ENCODE measurements at regions of chr2 and their contacts with region 1.

Region 1: DNA sequence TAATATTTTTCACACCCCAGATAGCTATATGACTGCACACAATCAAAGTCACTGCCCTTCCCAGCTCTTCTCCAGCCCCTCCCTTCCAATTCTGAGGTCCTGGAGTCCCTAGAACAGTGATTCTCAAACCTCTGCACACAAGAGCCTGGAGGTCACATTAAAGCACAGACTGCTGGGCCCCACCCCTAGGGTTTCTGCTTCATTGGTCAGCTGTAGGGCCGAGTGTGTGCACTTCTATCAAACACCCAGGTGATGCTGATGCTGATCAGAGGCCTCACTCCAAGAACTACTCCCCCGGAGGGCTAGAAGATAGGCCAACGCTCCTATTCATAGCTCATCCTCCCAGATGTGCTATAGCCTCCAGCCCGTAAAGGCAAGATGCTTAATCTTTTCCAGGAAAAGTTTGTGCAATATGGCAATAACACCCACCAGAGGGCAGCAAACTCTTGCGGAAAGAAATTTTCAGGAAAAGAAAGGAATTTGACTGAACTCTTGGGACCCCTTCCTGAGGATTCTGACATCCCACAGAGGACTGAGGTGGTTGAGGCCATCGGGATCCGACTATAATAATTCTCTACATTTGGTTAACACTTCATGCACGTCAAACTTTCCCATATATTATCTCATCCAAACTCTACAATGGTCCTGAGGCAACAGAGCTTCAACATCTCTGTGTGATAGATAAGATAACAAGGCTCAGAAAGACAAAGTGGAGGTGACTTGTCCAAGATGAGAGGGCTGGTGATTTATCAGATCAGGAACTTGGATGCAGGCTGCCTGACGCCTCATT is 194.2 kb upstream of the PKDCC start:
- DNase-seq: peak; percentile 71
- H3K4me3 ChIP-seq: no peak overlapping the region
- H3K27ac ChIP-seq: no peak overlapping the region
- H3K4me1 ChIP-seq: peaks cover 0 to 7% of the 10 kb centered on the region in 2 experiments; a peak in 1 of 4 replicates
- H3K27me3 ChIP-seq: no peaks in the 10 kb centered on the region; the same call in 1 of the 2 replicates
- CTCF ChIP-seq: peak; percentile 91
- EP300 ChIP-seq: 0 out of 4 replicates have a peak, but pooled peaks of 1 of the 2 experiments have one; percentile 13
- RAD21 ChIP-seq: peak; percentile 99

Region 2: DNA sequence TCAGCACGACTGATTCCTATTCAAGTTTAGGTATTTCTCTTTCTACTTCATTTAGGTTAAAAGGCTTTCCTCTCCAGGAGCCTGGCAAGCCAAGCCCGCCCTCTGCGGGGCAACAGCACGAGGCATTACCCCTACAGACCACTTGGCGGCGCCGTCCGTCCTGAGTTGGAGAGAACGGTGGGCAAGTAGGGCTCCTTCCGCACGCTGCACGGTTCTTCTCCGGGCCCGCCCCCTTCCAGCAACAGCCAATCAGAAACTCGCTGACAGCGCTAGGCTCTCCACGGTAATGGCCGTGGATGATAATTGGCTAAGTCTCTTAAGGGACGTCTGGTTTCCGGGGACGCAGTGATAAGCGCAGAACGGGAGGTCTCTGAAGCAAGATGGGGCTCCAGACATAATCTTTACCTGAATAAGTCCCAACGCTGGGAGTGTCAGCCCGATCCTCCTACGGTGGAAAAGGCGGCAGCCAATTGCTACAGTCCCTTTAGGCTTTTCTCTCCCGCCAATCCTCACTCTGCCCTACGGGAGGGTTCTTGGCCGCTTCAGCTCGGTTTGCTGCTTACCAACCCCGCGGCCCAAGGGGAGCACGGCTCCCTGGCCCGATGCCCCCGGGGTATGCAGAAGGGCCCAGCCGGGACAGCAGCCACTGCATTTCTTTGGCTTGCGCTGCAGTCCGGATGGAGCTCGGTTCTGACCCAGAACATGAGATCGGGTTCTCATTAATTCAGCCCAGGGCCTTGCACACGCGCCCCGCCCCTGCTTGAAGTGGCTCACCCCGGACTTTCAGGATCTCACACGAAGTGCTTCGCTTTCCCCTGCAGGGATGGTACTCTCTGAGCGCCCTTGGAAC is 12.7 kb before region 1 on chr2:
- CTCF ChIA-PET with region 1: interaction called, 66 read pairs
- POLR2A ChIA-PET with region 1: no interaction called
- DNase-seq: peak; percentile 96
- H3K4me3 ChIP-seq: peak overlapping the region; percentile 79 to 98
- H3K27ac ChIP-seq: peak overlapping the region; percentile 9 to 91; a peak in 3 of 4 replicates
- H3K4me1 ChIP-seq: peaks cover 0 to 10% of the 10 kb centered on the region in 2 experiments; a peak in 2 of 4 replicates
- H3K27me3 ChIP-seq: no peaks in the 10 kb centered on the region; the same call in 1 of the 2 replicates
- CTCF ChIP-seq: peak; percentile 99
- EP300 ChIP-seq: peak in 1 of 2 experiments; percentile 40; a peak in 1 of 4 replicates
- RAD21 ChIP-seq: peak; percentile 90

Region 3: GRCh38 chr2:41941831-41942230 is 88.2 kb after region 1 on chr2:
- CTCF ChIA-PET with region 1: interaction called, 10 read pairs
- POLR2A ChIA-PET with region 1: no interaction called
- DNase-seq: no peak
- H3K4me3 ChIP-seq: no peak overlapping the region
- H3K27ac ChIP-seq: no peak overlapping the region
- H3K4me1 ChIP-seq: peaks cover 16 to 19% of the 10 kb centered on the region in 2 experiments; a peak in 3 of 4 replicates
- H3K27me3 ChIP-seq: no peaks in the 10 kb centered on the region
- CTCF ChIP-seq: no peak
- EP300 ChIP-seq: no peak
- RAD21 ChIP-seq: no peak

Region 4: DNA sequence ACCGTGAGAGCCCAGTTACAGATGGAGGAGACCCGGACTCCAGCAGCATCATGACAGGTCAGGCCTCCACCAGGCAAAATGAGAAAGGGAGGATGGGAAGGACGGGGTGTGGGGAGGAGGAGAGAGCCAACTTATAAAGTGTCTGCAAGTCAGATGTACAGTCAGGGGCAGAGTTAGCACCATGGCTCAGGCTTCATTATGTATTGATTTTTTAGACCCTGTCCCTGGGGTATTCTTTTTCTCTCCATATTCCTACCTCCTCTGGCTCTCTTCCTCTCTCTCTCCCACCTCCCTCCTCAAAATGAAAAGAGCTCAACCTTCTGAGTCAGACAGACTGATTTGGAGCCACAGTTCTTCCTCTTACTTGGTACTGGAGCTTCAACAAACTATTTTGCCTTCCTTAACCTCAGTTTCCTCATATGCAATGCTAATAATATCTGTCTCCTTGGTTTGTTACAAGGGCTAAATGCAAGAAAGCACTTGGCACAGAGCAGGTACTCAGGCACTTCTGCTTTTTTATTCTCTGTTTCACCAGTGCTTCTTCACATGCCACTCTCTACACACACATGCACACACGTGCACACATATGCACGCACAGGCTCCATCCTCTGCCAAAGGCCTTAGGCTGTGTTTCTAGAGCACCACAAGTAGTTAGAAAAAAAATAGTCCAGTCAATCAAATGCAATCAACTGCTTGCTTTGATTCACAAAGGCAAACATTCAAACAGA is 101.9 kb after region 1 on chr2:
- CTCF ChIA-PET with region 1: interaction called, 17 read pairs
- POLR2A ChIA-PET with region 1: no interaction called
- DNase-seq: no peak
- H3K4me3 ChIP-seq: peak overlapping the region in 1 of 2 experiments; percentile 35; a peak in 2 of 4 replicates
- H3K27ac ChIP-seq: peak overlapping the region; percentile 36 to 99; a peak in 3 of 4 replicates
- H3K4me1 ChIP-seq: peaks cover 0 to 64% of the 10 kb centered on the region in 2 experiments; a peak in 2 of 4 replicates
- H3K27me3 ChIP-seq: no peaks in the 10 kb centered on the region; the same call in 1 of the 2 replicates
- CTCF ChIP-seq: no peak
- EP300 ChIP-seq: peak in 1 of 2 experiments; percentile 63; a peak in 2 of 4 replicates
- RAD21 ChIP-seq: peak; percentile 15; the same call in 1 of the 2 replicates

Region 5: GRCh38 chr2:42072349-42073118 is 218.9 kb after region 1 on chr2:
- CTCF ChIA-PET with region 1: interaction called, 29 read pairs
- POLR2A ChIA-PET with region 1: no interaction called
- DNase-seq: peak; percentile 80
- H3K4me3 ChIP-seq: no peak overlapping the region
- H3K27ac ChIP-seq: peak overlapping the region in 1 of 2 experiments; percentile 76; a peak in 2 of 4 replicates
- H3K4me1 ChIP-seq: peaks cover 0 to 49% of the 10 kb centered on the region in 2 experiments; a peak in 1 of 4 replicates
- H3K27me3 ChIP-seq: peaks cover 17% of the 10 kb centered on the region
- CTCF ChIP-seq: no peak
- EP300 ChIP-seq: peak in 1 of 2 experiments; percentile 5; a peak in 2 of 4 replicates
- RAD21 ChIP-seq: peak; percentile 39

Region 6: DNA sequence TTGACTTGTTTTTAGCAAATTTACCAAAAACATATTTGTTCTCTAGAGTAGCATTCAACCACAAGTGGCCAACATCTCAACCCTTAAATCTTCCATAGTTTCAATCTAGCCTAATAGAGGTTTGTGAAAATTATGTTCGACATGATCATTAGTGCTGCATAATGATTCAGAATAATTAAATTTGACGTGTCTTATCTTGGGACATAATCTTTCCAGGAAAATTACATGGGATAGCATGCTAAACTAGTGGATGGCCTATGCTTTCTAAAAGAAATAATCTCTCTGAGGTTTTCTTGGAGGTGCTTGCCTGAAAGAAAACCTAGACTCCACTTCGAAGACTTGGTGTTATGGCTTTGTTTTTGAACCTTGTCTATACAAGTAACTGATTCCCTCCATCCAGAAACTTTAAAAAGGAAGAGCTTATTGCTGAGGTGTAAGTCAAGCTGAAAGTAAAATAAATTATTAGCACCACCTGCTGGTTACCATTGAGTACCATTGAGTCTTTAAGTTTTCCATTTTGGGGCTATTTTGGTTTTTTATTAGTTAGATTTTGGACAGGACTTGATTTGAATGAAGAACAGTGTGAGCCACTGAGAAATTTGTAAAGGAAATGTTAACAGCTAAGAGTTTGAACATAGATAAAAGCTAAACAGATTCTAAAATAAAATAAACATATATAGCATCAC is 474.7 kb after region 1 on chr2:
- CTCF ChIA-PET with region 1: interaction called, 23 read pairs
- POLR2A ChIA-PET with region 1: no interaction called
- DNase-seq: no peak
- H3K4me3 ChIP-seq: no peak overlapping the region
- H3K27ac ChIP-seq: peak overlapping the region in 1 of 2 experiments; percentile 34; a peak in 2 of 4 replicates
- H3K4me1 ChIP-seq: no peaks in the 10 kb centered on the region; a peak in 1 of 4 replicates
- H3K27me3 ChIP-seq: no peaks in the 10 kb centered on the region
- CTCF ChIP-seq: peak; percentile 82
- EP300 ChIP-seq: no peak
- RAD21 ChIP-seq: peak; percentile 70